Right cardiac atrium (tissue), 5 donors: ENCODE measurements at regions of chr3 and their contacts with region 1.

Region 1: GRCh38 chr3:196079682-196080081 is 2.2 kb downstream of the TFRC start:
- DNase-seq: no peak
- ATAC-seq: no peak
- H3K4me3 ChIP-seq: no peak overlapping the region
- H3K27ac ChIP-seq: no peak overlapping the region
- H3K4me1 ChIP-seq: no peaks in the 10 kb centered on the region
- H3K27me3 ChIP-seq: no peaks in the 10 kb centered on the region

Region 2: DNA sequence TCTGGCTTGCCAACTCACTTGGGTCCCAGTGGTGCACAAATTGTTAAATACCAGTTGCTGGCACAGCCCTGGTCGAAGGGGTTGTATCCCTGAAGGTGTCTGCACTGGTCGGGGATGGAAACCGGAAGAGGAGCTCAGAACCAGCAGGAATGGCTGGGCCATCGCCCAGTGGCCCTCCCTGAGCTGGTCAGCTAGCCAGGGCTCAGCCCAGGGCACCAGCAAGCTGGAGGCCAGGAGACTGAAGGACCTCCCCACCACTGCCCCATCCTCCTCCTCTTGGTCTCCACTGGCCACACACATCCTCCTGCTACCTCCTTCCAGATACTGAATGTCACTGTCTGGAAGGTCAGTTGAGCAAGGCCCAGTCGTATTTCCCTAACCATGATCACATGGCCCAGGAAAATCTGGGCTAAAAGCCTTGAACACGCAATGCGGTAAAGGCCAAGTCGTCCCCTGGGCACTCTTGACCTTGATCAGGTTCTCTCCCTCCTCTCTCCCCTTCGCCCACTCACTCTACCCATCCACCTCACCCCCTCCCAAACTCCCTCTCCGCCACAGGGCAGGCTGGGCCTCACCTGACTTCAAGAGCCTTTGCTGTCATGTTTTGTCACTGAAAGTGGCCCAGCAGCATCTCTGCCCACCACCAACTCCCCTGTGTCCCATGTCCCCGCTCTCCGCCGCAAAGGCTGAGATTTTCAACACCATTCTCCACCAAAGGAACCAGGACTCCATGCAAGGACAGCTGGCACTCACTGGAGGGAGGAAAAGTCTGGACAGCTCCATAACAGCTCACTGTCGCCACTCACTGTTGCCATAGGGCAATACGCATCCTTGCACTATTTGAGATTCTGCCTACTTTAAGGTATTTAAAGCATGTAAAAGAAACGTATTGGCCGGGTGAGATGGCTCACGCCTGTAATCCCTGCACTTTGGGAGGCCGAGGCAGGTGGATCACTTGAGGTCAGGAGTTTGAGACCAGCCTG is 119.4 kb after region 1 on chr3:
- intact Hi-C with region 1: loop called in 2 of 4 experiments (anchors 5 kb)
- DNase-seq: peak in 1 of 3 donors; percentile 25
- ATAC-seq: no peak
- H3K4me3 ChIP-seq: no peak overlapping the region
- H3K27ac ChIP-seq: no peak overlapping the region
- H3K4me1 ChIP-seq: peaks cover 2% of the 10 kb centered on the region
- H3K27me3 ChIP-seq: no peaks in the 10 kb centered on the region